HCT116 (cell line): ENCODE measurements at regions of chr4 and their contacts with region 1.

Region 1: DNA sequence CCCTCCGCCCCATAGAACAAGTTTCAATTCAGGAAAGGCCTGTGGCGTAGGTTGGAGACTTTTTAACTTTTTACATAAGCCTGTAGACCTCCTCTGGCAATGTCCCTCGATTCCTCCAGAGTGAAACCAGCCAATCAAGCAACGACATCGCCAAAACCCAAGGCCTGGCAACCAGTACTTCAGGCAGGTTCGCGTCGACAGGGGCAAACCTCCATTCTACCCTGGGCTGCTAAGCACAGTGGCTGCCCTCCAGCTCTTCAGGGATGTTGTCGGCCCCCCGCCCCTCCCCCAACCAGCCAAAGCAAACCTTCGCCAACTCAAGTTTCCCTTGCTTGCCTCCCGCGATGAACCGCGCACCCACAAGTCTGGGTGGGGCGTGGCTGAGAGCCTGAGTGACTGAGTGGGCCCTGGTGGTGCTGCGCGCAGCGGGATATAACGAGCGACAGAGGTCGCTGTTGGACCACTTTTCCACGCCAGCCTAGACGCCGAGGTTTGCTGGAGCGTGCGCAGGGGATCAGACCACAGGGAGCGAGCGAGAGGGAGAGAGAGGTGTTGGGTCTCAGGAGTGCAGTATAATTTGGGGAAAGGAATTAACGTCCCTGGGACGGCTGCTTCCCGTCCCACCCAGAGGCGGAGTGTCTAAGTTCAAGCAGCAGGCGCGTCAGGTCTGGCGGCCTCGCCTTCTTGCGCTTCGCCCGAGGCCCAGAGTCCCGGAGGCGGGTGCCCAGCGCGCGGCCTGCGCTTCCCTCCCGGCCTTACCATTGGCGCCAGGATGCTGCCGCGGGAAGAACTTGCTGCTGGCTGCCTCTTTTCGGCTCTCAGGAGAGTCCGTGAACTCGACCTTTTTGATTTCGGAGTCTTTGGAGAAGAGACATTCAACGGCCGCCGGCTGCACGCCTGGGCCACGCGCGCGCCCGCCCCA is 9.0 kb upstream of the PITX2 start:
- DNase-seq: peak; percentile 68
- ATAC-seq: peak; percentile 95
- H3K4me3 ChIP-seq: peak overlapping the region; percentile 1 to 24; a peak in 1 of 4 replicates
- H3K27ac ChIP-seq: no peak overlapping the region
- H3K4me1 ChIP-seq: peaks cover 4 to 17% of the 10 kb centered on the region in 2 experiments; a peak in 3 of 4 replicates
- H3K27me3 ChIP-seq: no peaks in the 10 kb centered on the region
- CTCF ChIP-seq: peak; percentile 81 to 91 (median 86)
- POLR2A ChIP-seq: no peak
- RAD21 ChIP-seq: peak; percentile 96

Region 2: DNA sequence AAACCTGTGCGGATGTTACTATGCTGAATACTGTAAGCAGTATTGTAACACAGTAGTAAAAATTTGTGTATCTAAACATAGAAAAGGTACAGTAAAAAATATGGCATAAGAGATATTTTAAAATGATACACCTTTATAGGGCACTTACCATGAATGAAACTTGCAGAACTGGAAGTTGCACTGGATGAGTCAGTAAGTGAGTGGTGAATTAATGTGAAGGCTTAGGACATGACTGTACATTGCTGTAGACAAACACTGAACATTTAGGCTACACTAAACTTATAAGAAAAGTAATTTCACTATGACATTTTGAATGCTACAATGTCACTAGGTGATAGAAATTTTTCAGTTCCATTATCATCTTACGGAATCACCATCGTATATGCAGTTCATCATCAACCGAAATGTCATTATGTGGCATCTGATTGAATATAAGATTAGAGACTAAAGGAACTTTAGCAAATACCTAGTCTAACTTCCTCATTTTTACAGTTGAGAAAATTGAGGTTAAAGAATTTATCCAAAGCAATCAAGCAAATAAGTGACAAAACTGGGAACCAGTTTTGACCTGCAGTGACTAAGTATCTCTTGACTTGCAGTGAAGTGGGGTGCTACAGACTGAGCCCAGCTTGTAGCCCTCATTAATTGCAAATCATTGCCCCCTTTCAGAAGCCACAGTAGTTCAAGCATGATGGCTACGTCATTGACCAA is 663.9 kb before region 1 on chr4:
- CTCF ChIA-PET with region 1: no interaction called
- POLR2A ChIA-PET with region 1: no interaction called
- RAD21 ChIA-PET with region 1: no interaction called
- intact Hi-C with region 1: no loop called
- DNase-seq: no peak
- ATAC-seq: no peak
- H3K4me3 ChIP-seq: no peak overlapping the region
- H3K27ac ChIP-seq: no peak overlapping the region
- H3K4me1 ChIP-seq: peaks cover 0 to 9% of the 10 kb centered on the region in 2 experiments; a peak in 1 of 4 replicates
- H3K27me3 ChIP-seq: no peaks in the 10 kb centered on the region
- CTCF ChIP-seq: no peak
- POLR2A ChIP-seq: no peak
- RAD21 ChIP-seq: no peak

Region 3: DNA sequence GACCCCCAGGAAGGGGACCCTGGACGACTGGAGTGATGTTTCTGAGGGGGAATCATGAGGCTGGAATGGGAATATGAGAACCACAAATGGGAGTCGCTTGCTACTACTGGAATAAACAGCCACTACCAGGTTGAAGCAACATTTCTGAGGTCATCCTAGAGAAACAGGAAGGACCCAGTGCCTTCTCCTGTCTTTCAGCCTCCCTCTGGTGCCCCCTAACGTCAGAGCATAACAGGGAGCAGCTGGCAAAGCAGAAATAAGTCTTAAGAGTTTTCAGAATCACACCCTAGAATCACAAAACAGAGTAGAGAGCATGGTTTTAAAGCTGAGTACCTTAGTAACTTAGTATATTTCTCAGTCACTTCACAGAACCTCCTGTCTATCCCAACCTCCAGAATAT is 338.8 kb after region 1 on chr4:
- CTCF ChIA-PET with region 1: no interaction called
- POLR2A ChIA-PET with region 1: no interaction called
- RAD21 ChIA-PET with region 1: no interaction called
- intact Hi-C with region 1: loop called (anchors 1 kb)
- DNase-seq: peak; percentile 65
- ATAC-seq: peak; percentile 97
- H3K4me3 ChIP-seq: no peak overlapping the region
- H3K27ac ChIP-seq: no peak overlapping the region
- H3K4me1 ChIP-seq: peaks cover 0 to 3% of the 10 kb centered on the region in 2 experiments; a peak in 1 of 4 replicates
- H3K27me3 ChIP-seq: no peaks in the 10 kb centered on the region
- CTCF ChIP-seq: peak; percentile 42 to 91 (median 78); a peak in 5 of 6 replicates
- POLR2A ChIP-seq: no peak
- RAD21 ChIP-seq: peak; percentile 71

Region 4: GRCh38 chr4:111283061-111283677 is 651.3 kb after region 1 on chr4:
- CTCF ChIA-PET with region 1: interaction called, 3 read pairs
- POLR2A ChIA-PET with region 1: no interaction called
- RAD21 ChIA-PET with region 1: no interaction called
- intact Hi-C with region 1: loop called (anchors 2 kb)
- DNase-seq: peak; percentile 65
- ATAC-seq: peak; percentile 67
- H3K4me3 ChIP-seq: peak overlapping the region; percentile 25 to 34; a peak in 3 of 4 replicates
- H3K27ac ChIP-seq: no peak overlapping the region
- H3K4me1 ChIP-seq: no peaks in the 10 kb centered on the region
- H3K27me3 ChIP-seq: no peaks in the 10 kb centered on the region
- CTCF ChIP-seq: peak; percentile 71 to 89 (median 81)
- POLR2A ChIP-seq: no peak
- RAD21 ChIP-seq: peak; percentile 74

Region 5: GRCh38 chr4:111631215-111631999 is 999.6 kb after region 1 on chr4:
- CTCF ChIA-PET with region 1: no interaction called
- POLR2A ChIA-PET with region 1: no interaction called
- RAD21 ChIA-PET with region 1: no interaction called
- intact Hi-C with region 1: loop called (anchors 1 kb)
- DNase-seq: peak; percentile 12
- ATAC-seq: peak; percentile 67
- H3K4me3 ChIP-seq: no peak overlapping the region
- H3K27ac ChIP-seq: no peak overlapping the region
- H3K4me1 ChIP-seq: no peaks in the 10 kb centered on the region
- H3K27me3 ChIP-seq: no peaks in the 10 kb centered on the region
- CTCF ChIP-seq: peak; percentile 57 to 67 (median 58); a peak in 5 of 6 replicates
- POLR2A ChIP-seq: no peak
- RAD21 ChIP-seq: peak; percentile 47; the same call in 1 of the 2 replicates

Region 6: DNA sequence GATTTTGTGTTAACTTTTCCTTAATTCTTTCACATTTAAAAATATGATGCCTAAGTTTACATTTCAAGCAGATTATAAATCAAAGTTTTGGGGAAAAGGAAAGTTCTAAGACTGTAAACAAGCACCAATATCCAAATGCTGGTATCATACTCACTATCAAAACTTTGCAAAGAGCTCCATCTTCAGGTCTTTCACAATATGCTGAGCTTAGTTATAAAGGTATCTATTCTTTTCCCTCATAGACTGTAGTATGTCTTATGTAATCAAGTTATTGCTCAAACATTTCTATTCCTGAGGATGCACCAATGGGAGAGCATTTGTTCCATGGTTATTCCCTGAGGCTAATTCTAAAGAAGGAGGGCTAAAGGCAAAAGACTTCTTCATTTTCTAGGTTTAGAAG is 1305.5 kb after region 1 on chr4:
- CTCF ChIA-PET with region 1: no interaction called
- POLR2A ChIA-PET with region 1: no interaction called
- RAD21 ChIA-PET with region 1: no interaction called
- intact Hi-C with region 1: loop called (anchors 10 kb)
- DNase-seq: peak; percentile 48
- ATAC-seq: peak; percentile 88
- H3K4me3 ChIP-seq: no peak overlapping the region
- H3K27ac ChIP-seq: no peak overlapping the region
- H3K4me1 ChIP-seq: 0 out of 4 replicates have a peak, but pooled peaks cover 0 to 3% of the 10 kb centered on the region in 2 experiments
- H3K27me3 ChIP-seq: no peaks in the 10 kb centered on the region
- CTCF ChIP-seq: peak; percentile 31 to 72 (median 68); a peak in 5 of 6 replicates
- POLR2A ChIP-seq: no peak
- RAD21 ChIP-seq: peak; percentile 79